ENCODE measurements at regions of chr14 and their contacts with region 1.

Region 1: DNA sequence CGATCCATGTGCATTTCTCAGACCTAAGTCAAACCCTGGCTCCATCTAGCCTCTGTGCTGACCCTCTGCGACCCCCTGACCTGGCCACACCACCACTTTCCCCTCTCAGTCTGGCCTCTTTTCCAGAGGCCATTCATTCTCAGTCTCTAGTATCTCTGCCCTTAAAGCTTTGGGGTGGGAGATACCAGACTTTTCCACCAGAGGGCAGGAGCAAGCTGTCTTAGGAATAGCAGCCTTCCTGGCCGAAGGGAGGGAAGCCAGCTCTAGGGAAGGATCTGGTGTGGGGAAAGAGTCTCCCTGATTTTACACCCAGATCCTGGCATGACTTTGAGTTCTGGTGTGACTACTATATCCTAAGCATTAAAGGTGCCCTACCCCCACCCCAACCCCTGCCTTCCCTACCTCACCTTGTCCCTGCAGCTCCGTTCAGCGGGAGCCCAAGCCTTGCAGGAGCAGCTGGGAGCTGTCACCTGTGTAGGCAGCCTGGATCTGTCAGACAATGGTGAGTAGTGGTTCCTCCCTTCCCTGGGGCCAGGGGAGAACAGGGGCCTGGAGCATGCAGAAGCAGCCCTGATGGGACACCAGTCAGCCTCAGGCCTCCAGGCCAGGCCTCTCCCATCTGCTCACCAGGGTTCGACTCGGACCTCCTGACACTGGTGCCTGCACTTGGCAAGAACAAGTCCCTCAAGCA is 6.6 kb downstream of the CARMIL3 start:
- DNase-seq: peak in 1 of 2 donors; percentile 90
- H3K4me3 ChIP-seq: no peak overlapping the region
- CTCF ChIP-seq: peak in 1 of 3 donors; percentile 74
- POLR2A ChIP-seq: no peak

Region 2: DNA sequence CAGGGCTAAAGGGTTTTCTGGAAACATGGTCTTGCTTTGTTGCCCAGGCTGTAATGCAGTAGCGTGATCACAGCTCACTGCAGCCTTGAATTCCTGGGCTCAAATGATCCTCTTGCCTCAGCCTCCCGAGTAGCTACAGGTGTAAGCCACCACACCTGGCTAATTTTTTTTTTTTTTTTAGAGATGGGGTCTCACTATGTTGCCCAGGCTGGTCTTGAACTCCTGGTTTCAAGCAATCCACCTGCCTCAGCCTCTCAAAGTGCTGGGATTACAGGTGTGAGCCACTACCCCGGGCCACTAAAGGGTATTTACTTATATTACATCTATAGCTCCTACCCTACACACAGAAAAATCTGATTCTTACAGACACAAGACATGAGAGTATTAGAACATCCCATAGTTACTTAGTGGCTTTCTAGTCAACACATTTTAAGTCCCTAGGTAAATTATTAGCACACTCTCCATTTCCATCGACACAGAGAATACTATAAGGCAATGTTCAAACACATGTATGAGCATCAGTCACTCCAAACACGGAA is 50.0 kb after region 1 on chr14:
- intact Hi-C with region 1: loop called (anchors 5 kb)
- DNase-seq: no peak
- H3K4me3 ChIP-seq: no peak overlapping the region
- CTCF ChIP-seq: no peak
- POLR2A ChIP-seq: no peak

Measured in lower leg skin (tissue), 4 donors.